ENCODE measurements at regions of chr3 and their contacts with region 1.

Region 1: DNA sequence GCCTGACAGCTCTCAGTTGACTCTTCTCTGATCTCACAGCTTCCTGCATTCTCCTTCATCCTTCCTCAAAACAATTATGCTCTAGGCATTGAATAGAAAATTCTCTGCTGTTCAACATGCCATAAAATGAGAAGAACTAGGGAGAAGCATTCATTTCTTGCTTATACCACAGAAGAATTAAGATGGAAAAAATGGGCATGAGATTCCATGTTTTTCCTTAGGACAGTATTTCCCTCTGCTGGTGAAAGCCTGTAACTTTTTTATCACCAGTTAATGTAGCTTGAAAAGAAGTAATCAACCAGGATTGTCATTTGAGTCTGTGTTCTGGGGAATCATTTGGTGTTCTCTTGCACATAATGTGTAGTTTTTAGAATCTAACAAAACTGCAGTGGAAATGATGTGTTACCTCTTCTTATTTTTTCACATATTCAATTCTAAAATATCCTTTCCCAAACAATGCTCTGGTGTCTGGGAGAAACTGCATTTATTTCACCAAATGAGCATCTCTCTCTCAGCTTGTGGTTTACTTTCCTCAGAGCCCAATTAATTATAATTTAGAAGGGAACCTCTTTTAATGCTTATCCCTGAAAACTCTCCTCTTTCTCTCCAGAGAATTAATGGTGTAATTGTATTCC is 92.8 kb upstream of the DCBLD2 start:
- DNase-seq: no peak
- ATAC-seq: peak; percentile 27 to 63

Region 2: GRCh38 chr3:98817547-98818041 is 176.7 kb before region 1 on chr3:
- intact Hi-C with region 1: loop called (anchors 2 kb)
- DNase-seq: no peak
- ATAC-seq: peak; percentile 74 to 83

Region 3: GRCh38 chr3:99071096-99071495 is 76.9 kb after region 1 on chr3:
- intact Hi-C with region 1: no loop called
- DNase-seq: no peak
- ATAC-seq: no peak

Measured in left cardiac atrium (tissue), 4 donors.